ENCODE measurements at regions of chr5 and their contacts with region 1.

Region 1: DNA sequence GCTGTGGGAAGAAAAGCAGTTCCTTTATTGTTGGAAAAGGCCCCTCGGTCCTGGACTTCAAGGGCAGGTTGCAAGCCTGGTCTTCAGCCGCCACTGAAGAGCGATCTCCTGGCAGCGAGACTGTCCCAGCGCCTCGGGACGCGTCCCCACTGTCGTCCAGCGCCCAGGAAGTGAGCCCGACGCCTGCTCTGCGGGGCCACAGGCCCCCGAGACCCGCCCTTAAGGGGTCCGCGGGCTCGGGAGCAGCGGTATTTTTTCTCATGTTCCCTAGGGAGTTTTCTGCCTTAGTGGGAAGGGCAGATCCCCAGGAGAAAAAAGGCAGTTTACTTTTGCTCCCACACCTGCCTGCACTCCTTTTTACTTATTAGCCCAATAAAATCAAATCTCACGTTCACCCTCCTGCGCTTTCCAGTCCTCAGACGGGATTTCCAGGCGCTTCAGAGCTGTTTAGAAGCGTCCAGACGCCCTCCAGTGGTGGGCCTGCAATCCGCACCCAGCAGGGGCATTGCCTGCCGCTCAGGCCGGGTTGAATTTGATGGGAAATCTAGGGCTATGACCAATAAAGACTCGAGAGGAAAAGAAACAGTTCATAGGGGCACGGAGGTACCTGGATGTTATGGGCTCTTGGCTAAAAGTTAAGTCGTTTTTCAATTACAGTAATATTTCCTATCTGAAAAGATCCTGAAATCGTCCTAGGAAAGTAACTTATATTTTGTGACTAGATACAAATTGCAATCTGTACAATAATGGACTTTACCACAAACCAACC is 2.8 kb upstream of the EFNA5 start:
- DNase-seq: peak; percentile 87
- ATAC-seq: peak; percentile 42 to 57

Region 2: DNA sequence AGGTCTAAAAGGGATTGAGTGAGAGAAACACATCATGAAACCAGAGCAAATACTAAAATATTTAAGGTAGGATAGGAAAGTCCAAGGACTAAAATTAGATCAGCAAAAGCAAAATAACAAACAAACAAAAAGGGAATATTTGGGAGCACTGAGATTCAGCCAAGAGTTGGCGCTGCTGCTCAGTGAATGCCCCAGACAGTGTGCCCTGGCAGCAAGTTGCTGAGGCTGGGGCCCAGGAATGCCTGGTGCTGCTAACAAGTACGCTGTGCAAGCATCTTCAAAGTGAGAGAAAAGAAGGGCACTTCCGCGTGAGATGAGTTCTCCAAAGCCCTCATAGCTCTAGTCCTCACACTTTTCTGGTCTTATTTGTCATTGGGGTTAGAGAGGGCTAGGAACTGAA is 606.2 kb before region 1 on chr5:
- intact Hi-C with region 1: loop called in 1 of 2 experiments (anchors 10 kb)
- DNase-seq: peak; percentile 23
- ATAC-seq: no peak

Region 3: GRCh38 chr5:107104040-107104995 is 569.2 kb before region 1 on chr5:
- intact Hi-C with region 1: loop called in 1 of 2 experiments (anchors 2 kb)
- DNase-seq: no peak
- ATAC-seq: peak; percentile 87 to 93

Region 4: DNA sequence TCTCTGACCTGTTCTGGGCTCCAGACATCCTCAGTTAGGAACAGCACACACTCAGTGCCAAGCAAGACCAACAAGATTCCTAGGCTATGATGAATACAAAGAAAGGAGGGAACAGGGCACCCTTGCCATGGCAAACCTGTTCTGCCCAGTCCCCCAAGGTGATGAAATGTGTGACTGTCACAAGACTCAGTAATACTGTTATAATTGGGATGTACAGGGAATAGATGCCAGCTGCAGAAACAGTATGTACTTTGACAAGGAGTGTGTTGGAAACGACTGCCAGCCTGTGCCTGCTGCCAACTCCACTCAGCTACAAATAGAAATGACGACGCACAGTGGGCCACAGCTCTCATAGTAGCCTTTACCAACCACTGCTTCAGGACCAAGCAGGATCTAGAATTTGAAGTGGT is 455.8 kb before region 1 on chr5:
- intact Hi-C with region 1: loop called in 1 of 2 experiments (anchors 5 kb)
- DNase-seq: peak; percentile 64
- ATAC-seq: peak; percentile 96

Region 5: DNA sequence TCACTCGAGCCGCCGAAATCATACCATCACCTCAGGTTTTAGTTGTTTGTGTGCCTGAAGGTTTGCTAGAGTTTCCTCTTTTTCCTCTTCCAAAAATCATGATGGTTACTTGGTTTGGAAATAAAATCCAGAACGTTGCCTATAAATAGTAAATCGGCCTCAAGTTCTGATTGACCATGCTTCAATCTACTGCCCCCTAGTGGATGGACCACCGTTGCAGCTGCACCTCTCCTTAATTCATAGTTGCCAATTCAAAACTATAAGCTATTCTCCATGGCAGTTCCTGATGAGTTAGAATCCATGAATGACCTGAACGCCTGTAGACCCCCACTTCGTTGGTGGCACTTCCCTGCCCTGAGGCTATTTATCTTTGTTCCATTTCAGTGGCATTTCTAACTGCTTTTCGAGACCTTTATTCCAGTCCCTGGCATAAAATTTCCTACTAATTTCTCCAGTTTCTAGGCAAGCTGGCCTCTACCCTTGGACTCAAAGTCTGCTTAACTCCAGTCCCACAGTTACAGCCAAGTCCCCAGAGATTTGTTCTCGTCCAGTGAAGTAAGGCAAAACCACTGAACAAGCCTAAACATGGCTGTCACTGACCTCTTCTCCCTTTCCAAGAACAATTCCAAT is 425.4 kb before region 1 on chr5:
- intact Hi-C with region 1: loop called in 1 of 2 experiments (anchors 10 kb)
- DNase-seq: peak; percentile 41
- ATAC-seq: peak in 1 of 2 donors; percentile 49

Region 6: DNA sequence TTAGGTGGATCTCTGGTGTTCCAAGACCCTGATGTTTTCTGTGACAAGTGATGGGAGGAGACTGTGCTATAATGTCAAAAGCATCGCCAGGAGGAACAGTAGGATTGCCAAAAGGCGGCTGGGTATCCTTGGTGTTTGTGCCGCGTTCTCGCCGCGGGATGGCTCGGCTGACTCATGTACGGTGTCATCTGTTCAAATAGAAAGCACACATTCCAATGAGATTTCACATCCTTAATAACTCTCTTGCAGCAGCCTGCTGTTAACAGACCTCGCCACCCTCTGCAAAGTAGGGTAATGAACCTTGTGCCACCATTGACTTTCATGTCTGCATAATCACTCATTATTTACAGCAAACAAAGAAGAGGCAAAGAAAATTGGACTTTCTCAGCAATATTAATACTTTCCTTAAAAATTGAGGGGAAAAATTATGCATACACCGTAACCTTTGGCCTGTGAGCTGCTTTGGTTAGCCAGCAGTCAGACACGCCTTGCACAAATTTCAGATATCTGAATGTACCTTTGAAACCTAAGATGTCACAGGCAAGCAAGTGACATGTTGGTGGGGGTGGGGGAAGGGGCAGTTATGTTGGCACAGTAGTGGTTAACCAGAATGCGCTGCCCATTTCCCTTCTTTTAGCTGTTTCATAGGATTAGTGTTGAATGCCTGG is 292.2 kb before region 1 on chr5:
- intact Hi-C with region 1: loop called in 1 of 2 experiments (anchors 5 kb)
- DNase-seq: peak; percentile 38
- ATAC-seq: peak; percentile 81 to 92

Region 7: DNA sequence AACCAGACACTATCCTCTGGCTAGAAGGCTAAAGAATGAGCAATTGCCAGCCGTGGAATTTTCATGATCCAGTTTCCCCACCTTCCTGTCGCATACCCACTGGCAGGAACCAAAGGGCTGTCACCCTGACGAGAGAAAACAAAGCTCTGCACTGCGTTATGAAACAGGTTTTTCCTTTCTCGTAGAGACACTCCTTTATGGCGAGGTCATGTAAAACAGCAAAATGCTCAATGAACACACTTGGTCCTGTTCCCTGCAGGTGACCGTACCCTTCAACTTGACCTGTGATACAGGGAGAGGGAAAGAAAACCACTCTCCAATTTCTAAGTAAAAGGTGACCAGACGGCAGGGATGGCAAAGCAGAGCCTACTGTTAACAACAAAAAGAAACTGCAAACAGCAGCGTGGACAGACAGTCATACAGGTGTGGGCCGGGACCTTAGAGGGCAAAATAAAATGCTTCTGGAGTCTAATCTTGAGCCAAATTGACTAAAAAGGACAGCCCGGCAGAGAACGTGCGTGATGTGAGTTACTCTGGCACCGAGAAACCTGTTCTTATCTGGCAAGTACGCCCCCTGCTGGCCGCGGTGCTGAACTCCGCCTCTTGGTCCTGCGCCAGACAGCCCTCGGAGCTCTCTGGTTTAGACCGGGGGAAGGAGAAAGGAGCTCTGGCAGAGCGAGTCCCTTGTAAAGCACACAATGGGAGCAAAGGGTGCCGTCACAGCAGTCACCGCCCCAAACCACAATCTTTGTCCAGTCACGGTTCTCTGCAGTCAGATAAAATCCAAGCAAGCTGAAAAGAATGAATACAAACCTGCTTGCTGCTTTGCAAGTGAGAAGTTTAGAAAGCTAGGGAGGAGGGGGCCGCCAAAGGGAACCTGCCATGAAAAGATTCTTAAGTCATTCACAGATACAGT is 101.7 kb before region 1 on chr5:
- intact Hi-C with region 1: loop called in 1 of 2 experiments (anchors 5 kb)
- DNase-seq: peak; percentile 91
- ATAC-seq: peak; percentile 88 to 94

Measured in left cardiac atrium (tissue), 4 donors.